ENCODE measurements at regions of chr4 and their contacts with region 1.

Region 1: GRCh38 chr4:137819964-137820383 is 287.7 kb upstream of the PCDH18 start:
- DNase-seq: peak; percentile 64
- H3K4me3 ChIP-seq: no peak overlapping the region
- H3K27ac ChIP-seq: no peak overlapping the region
- H3K4me1 ChIP-seq: no peaks in the 10 kb centered on the region
- H3K27me3 ChIP-seq: no peaks in the 10 kb centered on the region

Region 2: DNA sequence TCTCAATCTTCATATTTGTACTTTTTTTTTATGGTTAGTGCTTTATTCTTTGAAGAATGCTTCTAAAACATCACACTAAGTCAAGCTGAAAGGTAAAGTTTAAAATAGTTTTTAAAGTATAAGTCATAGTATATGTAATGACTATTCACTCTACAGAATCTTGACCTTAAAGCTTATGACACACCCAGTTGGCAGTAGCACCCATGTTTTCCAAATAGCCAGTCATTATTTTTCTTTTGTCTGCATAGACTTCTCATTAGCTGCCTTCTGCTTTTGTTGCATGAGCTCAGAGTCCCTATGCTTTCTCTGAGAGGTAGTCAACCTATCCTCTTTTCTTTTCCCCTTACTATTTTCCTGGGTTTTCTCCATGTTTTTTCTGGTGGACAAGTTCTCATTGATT is 519.2 kb before region 1 on chr4:
- in situ Hi-C with region 1: no loop called
- DNase-seq: peak; percentile 67
- H3K4me3 ChIP-seq: no peak overlapping the region
- H3K27ac ChIP-seq: peak overlapping the region; percentile 30
- H3K4me1 ChIP-seq: peaks cover 14% of the 10 kb centered on the region
- H3K27me3 ChIP-seq: no peaks in the 10 kb centered on the region

Region 3: GRCh38 chr4:137881525-137882040 is 61.6 kb after region 1 on chr4:
- in situ Hi-C with region 1: no loop called
- DNase-seq: no peak
- H3K4me3 ChIP-seq: no peak overlapping the region
- H3K27ac ChIP-seq: no peak overlapping the region
- H3K4me1 ChIP-seq: no peaks in the 10 kb centered on the region
- H3K27me3 ChIP-seq: no peaks in the 10 kb centered on the region

Region 4: DNA sequence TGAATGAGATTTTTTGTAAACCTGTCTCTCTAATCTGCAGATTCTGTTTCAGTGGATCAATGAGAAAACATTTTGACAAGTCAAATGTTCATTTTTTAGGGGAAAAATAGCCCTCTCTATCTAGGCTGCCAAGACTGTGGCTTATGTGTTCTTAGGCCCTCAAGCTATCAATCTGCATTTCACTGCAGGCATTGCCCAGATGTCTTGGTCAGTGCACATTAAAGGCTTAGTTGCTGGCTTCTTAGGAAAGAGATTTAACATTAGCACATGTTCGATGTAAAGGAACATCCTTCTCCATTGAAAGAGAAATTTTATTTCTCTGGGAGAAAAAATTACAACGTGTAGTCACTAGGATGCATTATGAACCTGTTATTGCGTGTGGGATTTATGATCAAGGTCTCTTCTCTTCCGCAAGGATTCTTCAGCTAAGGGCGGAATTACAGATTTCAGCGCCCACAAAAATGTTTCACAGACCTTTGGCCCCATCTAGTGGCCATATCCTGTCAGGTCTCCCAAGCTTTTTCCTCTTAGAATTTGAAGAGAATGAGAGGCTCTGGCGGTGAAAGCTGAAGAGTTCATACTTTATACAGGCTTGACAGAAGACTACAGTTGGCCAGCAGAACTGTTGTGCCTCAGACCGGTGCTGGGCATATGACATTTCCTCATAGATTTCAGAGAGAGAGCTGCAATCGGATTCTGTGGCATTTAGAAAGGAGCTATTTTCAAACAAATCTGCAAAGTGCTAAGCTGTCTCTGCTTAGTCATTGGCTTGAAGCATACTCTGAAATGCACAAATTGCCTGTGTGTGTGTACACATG is 1051.0 kb after region 1 on chr4:
- in situ Hi-C with region 1: loop called (anchors 25 kb)
- DNase-seq: peak; percentile 81
- H3K4me3 ChIP-seq: no peak overlapping the region
- H3K27ac ChIP-seq: no peak overlapping the region
- H3K4me1 ChIP-seq: peaks cover 11% of the 10 kb centered on the region; the same call in 1 of the 2 replicates
- H3K27me3 ChIP-seq: peaks cover 28% of the 10 kb centered on the region; the same call in 1 of the 2 replicates